ENCODE measurements at regions of chr22 and their contacts with region 1.

Region 1: GRCh38 chr22:19629720-19630419 is 84.4 kb upstream of the SEPTIN5 start:
- DNase-seq: peak; percentile 74 to 92 (median 84)
- ATAC-seq: peak; percentile 94
- H3K4me3 ChIP-seq: no peak overlapping the region
- H3K4me3 Mint-ChIP-seq: no peak overlapping the region
- H3K27ac ChIP-seq: no peak overlapping the region
- H3K27ac Mint-ChIP-seq: no peak overlapping the region
- H3K4me1 ChIP-seq: peaks cover 3% of the 10 kb centered on the region
- H3K4me1 Mint-ChIP-seq: peaks cover 3% of the 10 kb centered on the region
- H3K27me3 ChIP-seq: no peaks in the 10 kb centered on the region
- H3K27me3 Mint-ChIP-seq: peaks cover 1% of the 10 kb centered on the region
- CTCF ChIP-seq: peak; percentile 78

Region 2: GRCh38 chr22:18987765-18988164 is 642.1 kb before region 1 on chr22:
- CTCF ChIA-PET with region 1: no interaction called
- POLR2A ChIA-PET with region 1: no interaction called
- intact Hi-C with region 1: no loop called
- DNase-seq: no peak
- ATAC-seq: no peak
- H3K4me3 ChIP-seq: no peak overlapping the region
- H3K4me3 Mint-ChIP-seq: no peak overlapping the region
- H3K27ac ChIP-seq: no peak overlapping the region
- H3K27ac Mint-ChIP-seq: no peak overlapping the region
- H3K4me1 ChIP-seq: no peaks in the 10 kb centered on the region
- H3K4me1 Mint-ChIP-seq: no peaks in the 10 kb centered on the region
- H3K27me3 ChIP-seq: no peaks in the 10 kb centered on the region
- H3K27me3 Mint-ChIP-seq: peaks cover 3% of the 10 kb centered on the region
- CTCF ChIP-seq: no peak

Region 3: DNA sequence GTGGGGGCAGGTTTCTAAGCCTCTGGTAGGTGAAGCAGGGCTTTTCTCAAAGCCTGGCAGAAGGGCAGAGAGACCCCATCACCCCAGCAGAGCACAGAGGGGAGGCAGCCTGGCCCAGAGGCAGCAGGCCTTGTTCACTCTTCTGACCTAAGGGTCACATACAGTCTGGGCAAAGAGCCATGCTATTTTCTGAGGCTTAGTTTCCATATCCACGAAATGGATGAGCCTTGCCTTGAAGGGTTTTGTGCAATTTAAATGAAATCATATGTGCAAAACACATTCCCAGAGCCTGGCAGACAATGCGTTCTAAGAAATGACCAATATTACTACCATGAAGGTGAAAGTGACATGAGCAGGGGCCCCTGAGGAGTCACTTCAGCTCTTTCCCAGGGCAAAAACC is 242.8 kb before region 1 on chr22:
- CTCF ChIA-PET with region 1: interaction called, 3 read pairs
- POLR2A ChIA-PET with region 1: no interaction called
- intact Hi-C with region 1: loop called in 1 of 2 experiments (anchors 1 kb)
- DNase-seq: no peak
- ATAC-seq: no peak
- H3K4me3 ChIP-seq: no peak overlapping the region
- H3K4me3 Mint-ChIP-seq: no peak overlapping the region
- H3K27ac ChIP-seq: no peak overlapping the region
- H3K27ac Mint-ChIP-seq: no peak overlapping the region
- H3K4me1 ChIP-seq: no peaks in the 10 kb centered on the region
- H3K4me1 Mint-ChIP-seq: no peaks in the 10 kb centered on the region
- H3K27me3 ChIP-seq: no peaks in the 10 kb centered on the region
- H3K27me3 Mint-ChIP-seq: no peaks in the 10 kb centered on the region
- CTCF ChIP-seq: no peak

Region 4: GRCh38 chr22:19495562-19496323 is 134.1 kb before region 1 on chr22:
- CTCF ChIA-PET with region 1: interaction called, 26 read pairs
- POLR2A ChIA-PET with region 1: no interaction called
- intact Hi-C with region 1: loop called (anchors 1 kb)
- DNase-seq: peak in 2 of 9 experiments; percentile 26 to 58
- ATAC-seq: no peak
- H3K4me3 ChIP-seq: no peak overlapping the region
- H3K4me3 Mint-ChIP-seq: no peak overlapping the region
- H3K27ac ChIP-seq: no peak overlapping the region
- H3K27ac Mint-ChIP-seq: peak overlapping the region; percentile 49
- H3K4me1 ChIP-seq: peaks cover 8% of the 10 kb centered on the region
- H3K4me1 Mint-ChIP-seq: peaks cover 7% of the 10 kb centered on the region
- H3K27me3 ChIP-seq: no peaks in the 10 kb centered on the region
- H3K27me3 Mint-ChIP-seq: no peaks in the 10 kb centered on the region
- CTCF ChIP-seq: no peak

Region 5: GRCh38 chr22:19641254-19641982 is 11.5 kb after region 1 on chr22:
- CTCF ChIA-PET with region 1: interaction called, 12 read pairs
- POLR2A ChIA-PET with region 1: no interaction called
- intact Hi-C with region 1: no loop called
- DNase-seq: no peak
- ATAC-seq: no peak
- H3K4me3 ChIP-seq: no peak overlapping the region
- H3K4me3 Mint-ChIP-seq: no peak overlapping the region
- H3K27ac ChIP-seq: no peak overlapping the region
- H3K27ac Mint-ChIP-seq: no peak overlapping the region
- H3K4me1 ChIP-seq: no peaks in the 10 kb centered on the region
- H3K4me1 Mint-ChIP-seq: no peaks in the 10 kb centered on the region
- H3K27me3 ChIP-seq: no peaks in the 10 kb centered on the region
- H3K27me3 Mint-ChIP-seq: peaks cover 17% of the 10 kb centered on the region
- CTCF ChIP-seq: no peak